ENCODE measurements at regions of chr2 and their contacts with region 1.

Region 1: GRCh38 chr2:6896930-6897759 is 19.6 kb downstream of the RSAD2 start:
- DNase-seq: peak in 6 of 9 donors; percentile 32 to 54 (median 50)
- ATAC-seq: peak; percentile 57
- H3K4me3 ChIP-seq: no peak overlapping the region
- H3K4me3 Mint-ChIP-seq: no peak overlapping the region
- H3K27ac ChIP-seq: no peak overlapping the region
- H3K27ac Mint-ChIP-seq: peak overlapping the region in 1 of 9 donors; percentile 48
- H3K4me1 ChIP-seq: no peaks in the 10 kb centered on the region
- H3K4me1 Mint-ChIP-seq: peaks cover 0 to 25% (median 17%) of the 10 kb centered on the region in 7 donors
- H3K27me3 ChIP-seq: no peaks in the 10 kb centered on the region
- H3K27me3 Mint-ChIP-seq: no peaks in the 10 kb centered on the region

Region 2: GRCh38 chr2:6754419-6754818 is 142.7 kb before region 1 on chr2:
- CTCF ChIA-PET with region 1: no interaction called
- POLR2A ChIA-PET with region 1: no interaction called
- intact Hi-C with region 1: no loop called
- DNase-seq: no peak
- ATAC-seq: no peak
- H3K4me3 ChIP-seq: no peak overlapping the region
- H3K4me3 Mint-ChIP-seq: no peak overlapping the region
- H3K27ac ChIP-seq: no peak overlapping the region
- H3K27ac Mint-ChIP-seq: no peak overlapping the region
- H3K4me1 ChIP-seq: no peaks in the 10 kb centered on the region
- H3K4me1 Mint-ChIP-seq: peaks cover 0 to 2% (median 0%) of the 10 kb centered on the region in 7 donors
- H3K27me3 ChIP-seq: no peaks in the 10 kb centered on the region
- H3K27me3 Mint-ChIP-seq: peaks cover 5 to 34% (median 22%) of the 10 kb centered on the region in 5 donors

Region 3: DNA sequence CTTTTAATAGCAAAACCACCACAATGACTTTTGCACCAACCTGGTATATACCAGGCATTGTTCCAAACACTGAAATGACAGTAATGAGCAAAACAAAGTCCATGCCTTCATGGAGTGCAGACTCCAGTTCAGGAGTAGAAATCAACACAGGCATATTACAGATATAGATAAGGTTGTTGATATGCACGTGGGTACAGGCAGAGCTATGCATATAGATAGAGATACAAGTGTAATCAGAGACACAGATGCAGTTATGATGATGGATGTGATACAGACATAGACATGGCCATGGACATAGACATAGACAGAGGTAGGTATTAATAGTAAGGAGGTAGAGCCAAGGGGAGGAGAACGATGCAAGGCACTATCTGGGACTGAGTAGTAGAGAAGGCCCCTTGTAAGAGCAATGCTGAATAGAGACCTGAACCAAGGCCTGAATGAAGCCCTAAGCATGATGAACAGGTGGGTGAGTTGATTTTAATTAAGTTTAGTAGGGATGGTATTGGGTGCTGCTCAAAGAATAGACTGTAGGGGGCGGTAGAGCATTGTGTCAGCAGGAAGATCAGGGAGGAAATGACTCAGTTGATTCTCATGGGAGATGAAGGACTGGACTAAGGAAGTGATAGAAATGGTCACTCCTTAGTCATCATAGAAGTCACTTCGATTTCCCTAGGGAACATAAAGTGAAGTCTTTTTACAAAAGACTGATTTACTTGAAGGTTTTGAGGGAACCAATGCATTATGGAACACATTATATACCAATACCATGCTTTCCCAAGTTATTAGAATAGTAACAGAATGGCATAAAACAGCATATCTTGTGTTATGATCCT is 70.8 kb before region 1 on chr2:
- CTCF ChIA-PET with region 1: no interaction called
- POLR2A ChIA-PET with region 1: no interaction called
- intact Hi-C with region 1: loop called in 1 of 2 experiments (anchors 1 kb)
- DNase-seq: peak in 8 of 9 donors; percentile 26 to 58 (median 51)
- ATAC-seq: peak; percentile 92
- H3K4me3 ChIP-seq: no peak overlapping the region
- H3K4me3 Mint-ChIP-seq: no peak overlapping the region
- H3K27ac ChIP-seq: no peak overlapping the region
- H3K27ac Mint-ChIP-seq: no peak overlapping the region
- H3K4me1 ChIP-seq: no peaks in the 10 kb centered on the region
- H3K4me1 Mint-ChIP-seq: peaks cover 0 to 14% (median 11%) of the 10 kb centered on the region in 7 donors
- H3K27me3 ChIP-seq: no peaks in the 10 kb centered on the region
- H3K27me3 Mint-ChIP-seq: no peaks in the 10 kb centered on the region

Region 4: GRCh38 chr2:6909431-6910385 is 12.6 kb after region 1 on chr2:
- CTCF ChIA-PET with region 1: interaction called, 39 read pairs
- POLR2A ChIA-PET with region 1: interaction called, 18 read pairs
- intact Hi-C with region 1: loop called (anchors 1 kb)
- DNase-seq: peak in 7 of 9 donors; percentile 70 to 84 (median 80)
- ATAC-seq: peak; percentile 84
- H3K4me3 ChIP-seq: peak overlapping the region; percentile 17
- H3K4me3 Mint-ChIP-seq: peak overlapping the region; percentile 68 to 85 (median 80)
- H3K27ac ChIP-seq: peak overlapping the region; percentile 85
- H3K27ac Mint-ChIP-seq: peak overlapping the region; percentile 85 to 99 (median 92)
- H3K4me1 ChIP-seq: peaks cover 58 to 94% of the 10 kb centered on the region in 2 donors
- H3K4me1 Mint-ChIP-seq: peaks cover 61 to 97% (median 93%) of the 10 kb centered on the region in 7 donors
- H3K27me3 ChIP-seq: no peaks in the 10 kb centered on the region
- H3K27me3 Mint-ChIP-seq: peaks cover 0 to 12% (median 0%) of the 10 kb centered on the region in 5 donors

Region 5: GRCh38 chr2:6934758-6935651 is 37.9 kb after region 1 on chr2:
- CTCF ChIA-PET with region 1: interaction called, 8 read pairs
- POLR2A ChIA-PET with region 1: interaction called, 3 read pairs
- intact Hi-C with region 1: loop called in 1 of 2 experiments (anchors 5 kb)
- DNase-seq: no peak
- ATAC-seq: no peak
- H3K4me3 ChIP-seq: no peak overlapping the region
- H3K4me3 Mint-ChIP-seq: peak overlapping the region; percentile 2 to 68 (median 42)
- H3K27ac ChIP-seq: no peak overlapping the region
- H3K27ac Mint-ChIP-seq: peak overlapping the region; percentile 6 to 88 (median 45)
- H3K4me1 ChIP-seq: peaks cover 3 to 36% of the 10 kb centered on the region in 2 donors
- H3K4me1 Mint-ChIP-seq: peaks cover 35 to 89% (median 81%) of the 10 kb centered on the region in 7 donors
- H3K27me3 ChIP-seq: peaks cover 0 to 2% of the 10 kb centered on the region in 2 donors
- H3K27me3 Mint-ChIP-seq: no peaks in the 10 kb centered on the region

Region 6: GRCh38 chr2:7014174-7014640 is 117.1 kb after region 1 on chr2:
- CTCF ChIA-PET with region 1: interaction called, 22 read pairs
- POLR2A ChIA-PET with region 1: interaction called, 4 read pairs
- intact Hi-C with region 1: loop called (anchors 1 kb)
- DNase-seq: peak in 7 of 9 donors; percentile 14 to 51 (median 27)
- ATAC-seq: peak; percentile 83
- H3K4me3 ChIP-seq: no peak overlapping the region
- H3K4me3 Mint-ChIP-seq: peak overlapping the region in 1 of 10 donors; percentile 32
- H3K27ac ChIP-seq: no peak overlapping the region
- H3K27ac Mint-ChIP-seq: peak overlapping the region in 8 of 9 donors; percentile 19 to 82 (median 61)
- H3K4me1 ChIP-seq: peaks cover 0 to 6% of the 10 kb centered on the region in 2 donors
- H3K4me1 Mint-ChIP-seq: peaks cover 16 to 57% (median 44%) of the 10 kb centered on the region in 7 donors
- H3K27me3 ChIP-seq: no peaks in the 10 kb centered on the region
- H3K27me3 Mint-ChIP-seq: no peaks in the 10 kb centered on the region

Region 7: GRCh38 chr2:7044261-7045250 is 147.4 kb after region 1 on chr2:
- CTCF ChIA-PET with region 1: interaction called, 47 read pairs
- POLR2A ChIA-PET with region 1: no interaction called
- intact Hi-C with region 1: loop called (anchors 1 kb)
- DNase-seq: peak; percentile 29 to 67 (median 59)
- ATAC-seq: peak; percentile 91
- H3K4me3 ChIP-seq: no peak overlapping the region
- H3K4me3 Mint-ChIP-seq: peak overlapping the region in 1 of 10 donors; percentile 10
- H3K27ac ChIP-seq: no peak overlapping the region
- H3K27ac Mint-ChIP-seq: peak overlapping the region in 8 of 9 donors; percentile 30 to 77 (median 58)
- H3K4me1 ChIP-seq: peaks cover 0 to 4% of the 10 kb centered on the region in 2 donors
- H3K4me1 Mint-ChIP-seq: peaks cover 5 to 54% (median 35%) of the 10 kb centered on the region in 7 donors
- H3K27me3 ChIP-seq: no peaks in the 10 kb centered on the region
- H3K27me3 Mint-ChIP-seq: no peaks in the 10 kb centered on the region